Panc1 (cell line): ENCODE measurements at regions of chr1 and their contacts with region 1.

Region 1: DNA sequence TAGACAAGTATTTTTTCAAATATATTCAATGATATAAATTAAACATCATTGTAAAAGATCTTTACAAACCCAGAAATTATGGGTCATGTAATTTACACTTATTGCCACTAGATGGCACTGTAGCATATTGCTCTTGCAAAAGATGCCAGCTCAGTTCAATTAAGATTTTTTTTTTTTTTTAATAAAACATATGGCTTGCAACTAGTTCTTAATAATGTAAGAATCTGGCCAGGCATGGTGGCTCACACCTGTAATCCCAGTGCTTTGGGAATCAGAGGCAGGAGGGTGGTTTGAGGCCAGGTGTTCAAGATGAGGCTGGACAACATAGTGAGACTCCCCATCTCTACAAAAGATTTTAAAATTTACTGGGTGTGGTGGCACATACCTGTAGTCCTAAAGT is 49.4 kb upstream of the DESI2 start:
- DNase-seq: no peak
- ATAC-seq: no peak
- H3K4me3 ChIP-seq: no peak overlapping the region
- H3K27ac ChIP-seq: no peak overlapping the region
- H3K4me1 ChIP-seq: peaks cover 5% of the 10 kb centered on the region; the same call in 1 of the 2 replicates
- H3K27me3 ChIP-seq: no peaks in the 10 kb centered on the region
- CTCF ChIP-seq: peak; percentile 79

Region 2: GRCh38 chr1:244576259-244576892 is 27.1 kb before region 1 on chr1:
- CTCF ChIA-PET with region 1: no interaction called
- POLR2A ChIA-PET with region 1: interaction called, 13 read pairs
- in situ Hi-C with region 1: no loop called
- intact Hi-C with region 1: no loop called
- DNase-seq: no peak
- ATAC-seq: no peak
- H3K4me3 ChIP-seq: no peak overlapping the region
- H3K27ac ChIP-seq: no peak overlapping the region
- H3K4me1 ChIP-seq: no peaks in the 10 kb centered on the region
- H3K27me3 ChIP-seq: no peaks in the 10 kb centered on the region
- CTCF ChIP-seq: no peak

Region 3: GRCh38 chr1:244639561-244639960 is 36.1 kb after region 1 on chr1:
- CTCF ChIA-PET with region 1: interaction called, 10 read pairs
- POLR2A ChIA-PET with region 1: no interaction called
- in situ Hi-C with region 1: no loop called
- intact Hi-C with region 1: no loop called
- DNase-seq: no peak
- ATAC-seq: no peak
- H3K4me3 ChIP-seq: no peak overlapping the region
- H3K27ac ChIP-seq: no peak overlapping the region
- H3K4me1 ChIP-seq: no peaks in the 10 kb centered on the region
- H3K27me3 ChIP-seq: peaks cover 4% of the 10 kb centered on the region; the same call in 1 of the 2 replicates
- CTCF ChIP-seq: no peak

Region 4: DNA sequence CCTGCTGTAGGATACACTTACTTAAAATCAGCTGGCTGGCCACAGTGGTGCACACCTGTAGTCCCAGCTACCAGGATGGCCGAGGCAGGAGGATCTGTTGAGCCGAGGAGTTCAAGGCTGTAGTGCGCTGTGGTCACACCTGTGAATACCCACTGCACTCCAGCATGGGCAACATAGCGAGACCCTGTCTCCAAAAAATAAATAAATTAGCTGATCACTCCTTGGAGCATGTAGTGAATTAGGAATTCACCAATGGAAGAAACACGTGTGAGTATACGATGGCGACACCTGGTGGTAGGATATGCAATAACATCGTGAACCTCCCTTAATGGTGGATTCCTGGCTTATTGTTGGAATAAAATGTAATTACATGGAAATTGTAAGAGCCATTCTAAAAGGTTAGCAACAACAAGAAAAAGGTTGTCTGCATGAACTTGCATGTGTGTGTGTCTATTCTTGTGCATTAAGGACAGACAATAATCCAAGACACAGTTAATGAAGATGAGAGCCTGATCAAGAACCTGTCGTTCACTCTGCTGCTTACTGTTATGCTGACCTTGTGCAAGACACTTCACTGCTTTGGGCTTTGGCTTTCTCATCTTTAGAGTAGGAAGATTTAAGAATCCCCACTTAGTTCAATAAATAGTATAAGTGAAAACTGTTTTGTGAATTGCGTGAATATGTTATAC is 193.4 kb after region 1 on chr1:
- CTCF ChIA-PET with region 1: interaction called, 7 read pairs
- POLR2A ChIA-PET with region 1: no interaction called
- in situ Hi-C with region 1: no loop called
- intact Hi-C with region 1: loop called (anchors 1 kb)
- DNase-seq: peak; percentile 43
- ATAC-seq: peak; percentile 85
- H3K4me3 ChIP-seq: no peak overlapping the region
- H3K27ac ChIP-seq: no peak overlapping the region
- H3K4me1 ChIP-seq: no peaks in the 10 kb centered on the region
- H3K27me3 ChIP-seq: no peaks in the 10 kb centered on the region
- CTCF ChIP-seq: peak; percentile 84